ENCODE measurements at regions of chr15 and their contacts with region 1.

Region 1: DNA sequence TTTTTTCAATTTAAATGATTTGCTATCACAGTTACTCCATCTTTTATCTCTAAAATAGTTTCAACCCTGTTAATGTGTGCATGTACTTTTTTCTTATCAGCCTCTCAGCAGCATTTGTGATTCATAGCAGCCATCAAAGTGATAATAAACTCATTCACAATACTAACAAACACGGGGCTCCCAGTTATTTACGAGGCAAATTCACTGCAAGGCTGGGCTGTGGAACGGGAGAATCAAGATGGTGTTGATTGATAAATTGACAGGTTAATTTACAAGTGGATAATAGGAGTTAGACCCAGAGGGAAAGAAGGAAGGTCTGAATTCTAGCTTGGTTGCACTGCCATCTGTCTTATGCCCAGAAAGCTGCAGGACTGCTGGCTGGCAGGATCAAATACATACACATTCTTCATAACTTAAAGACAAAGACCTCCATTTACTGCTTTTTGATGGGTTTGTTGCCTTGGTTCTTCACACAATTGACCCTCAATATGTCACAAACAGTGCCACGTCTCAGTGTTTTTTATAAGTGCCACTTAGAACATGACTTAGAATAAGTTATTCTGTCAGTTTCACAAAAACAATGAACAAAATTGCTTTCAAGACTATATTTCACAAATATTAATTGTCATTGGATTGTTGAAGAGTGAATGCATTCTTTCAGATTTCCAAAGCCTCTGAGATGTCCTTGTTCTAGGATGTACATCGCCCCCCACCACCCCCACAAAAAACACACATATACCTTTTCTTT is 562.8 kb downstream of the NR2F2 start:
- DNase-seq: no peak
- ATAC-seq: peak; percentile 77 to 87 (median 85)
- H3K4me3 ChIP-seq: no peak overlapping the region
- H3K27ac ChIP-seq: no peak overlapping the region
- H3K4me1 ChIP-seq: peaks cover 0 to 6% (median 2%) of the 10 kb centered on the region in 4 donors
- H3K27me3 ChIP-seq: no peaks in the 10 kb centered on the region
- CTCF ChIP-seq: peak; percentile 63 to 71 (median 69)
- POLR2A ChIP-seq: no peak

Region 2: DNA sequence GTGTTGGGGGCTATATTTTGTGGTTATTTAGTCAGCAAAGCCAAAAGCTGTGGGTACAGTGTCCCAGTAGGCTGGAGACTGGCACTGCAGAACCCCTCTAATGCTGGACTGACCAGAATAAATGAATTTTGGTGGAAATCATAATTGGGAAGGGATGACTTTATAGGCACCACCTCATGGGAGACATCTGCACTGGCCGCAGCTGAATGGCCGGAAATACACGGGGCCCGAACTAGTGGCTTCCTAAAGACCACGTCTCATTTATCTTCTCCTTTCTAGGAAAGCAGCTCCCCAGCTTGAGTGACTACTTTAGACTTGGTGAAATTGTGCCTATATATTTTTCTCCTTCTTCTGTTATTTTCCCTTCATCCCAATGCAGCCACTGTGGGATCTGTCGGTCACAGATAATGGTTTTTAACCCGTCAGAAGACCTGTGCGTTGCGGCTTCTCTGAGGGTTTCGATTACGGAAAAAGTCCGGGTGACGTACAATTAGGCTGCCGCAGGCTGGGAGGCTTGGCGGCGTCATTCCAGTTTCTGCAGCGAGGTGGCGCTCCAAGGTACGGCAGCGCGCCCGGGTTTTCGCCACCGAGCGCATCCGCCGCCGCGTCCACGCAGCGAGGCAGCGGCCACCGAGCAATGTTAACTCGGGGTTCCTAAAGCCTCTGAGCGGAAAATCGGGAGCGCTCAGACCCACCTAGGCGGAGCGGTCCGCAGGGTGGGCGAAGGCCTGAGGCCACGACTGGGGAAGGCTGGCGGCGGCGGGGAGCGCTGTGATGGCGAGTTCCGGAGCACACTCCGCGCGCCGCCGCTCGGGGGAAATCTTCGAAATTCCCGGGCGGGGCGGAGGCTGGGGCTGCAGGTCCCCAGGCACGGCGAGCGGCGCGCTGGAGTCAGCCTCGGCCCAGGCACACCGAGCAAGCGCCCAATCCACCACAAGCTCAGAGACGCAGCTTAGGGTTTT is 536.6 kb before region 1 on chr15:
- intact Hi-C with region 1: loop called in 1 of 2 experiments (anchors 10 kb)
- DNase-seq: peak; percentile 80 to 86 (median 85)
- ATAC-seq: peak; percentile 70 to 78 (median 76)
- H3K4me3 ChIP-seq: peak overlapping the region; percentile 60 to 70 (median 64)
- H3K27ac ChIP-seq: peak overlapping the region; percentile 17 to 60 (median 58)
- H3K4me1 ChIP-seq: peaks cover 0 to 24% (median 4%) of the 10 kb centered on the region in 4 donors
- H3K27me3 ChIP-seq: no peaks in the 10 kb centered on the region
- CTCF ChIP-seq: peak; percentile 95 to 97 (median 96)
- POLR2A ChIP-seq: no peak

Region 3: DNA sequence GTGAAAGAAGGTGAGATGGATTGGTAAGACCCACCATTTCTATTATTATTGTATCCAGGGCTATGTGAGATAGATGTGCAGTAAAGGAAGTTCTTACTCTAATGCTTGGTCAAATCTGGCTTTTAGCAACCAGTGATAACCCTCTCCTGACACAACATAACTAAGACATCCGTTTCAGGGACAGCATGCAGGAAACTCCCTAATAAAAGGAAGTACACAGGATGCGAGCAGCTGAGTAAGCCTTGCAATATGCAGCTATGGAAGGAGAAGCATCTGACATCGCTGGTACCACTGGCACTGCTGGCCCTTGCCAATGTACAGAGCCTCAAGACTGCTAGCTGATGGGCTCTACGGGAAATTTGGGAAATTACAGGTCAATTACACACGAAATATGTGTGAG is 99.5 kb after region 1 on chr15:
- intact Hi-C with region 1: no loop called
- DNase-seq: no peak
- ATAC-seq: peak; percentile 56 to 76 (median 64)
- H3K4me3 ChIP-seq: no peak overlapping the region
- H3K27ac ChIP-seq: no peak overlapping the region
- H3K4me1 ChIP-seq: no peaks in the 10 kb centered on the region
- H3K27me3 ChIP-seq: no peaks in the 10 kb centered on the region
- CTCF ChIP-seq: no peak
- POLR2A ChIP-seq: no peak